Common myeloid progenitor, CD34-positive (primary cell): ENCODE measurements at regions of chr12 and their contacts with region 1.

Region 1: GRCh38 chr12:64256166-64256800 is 34.2 kb upstream of the KICS2 start:
- DNase-seq: peak; percentile 61 to 79 (median 71)
- H3K4me3 ChIP-seq: no peak overlapping the region
- H3K27ac ChIP-seq: no peak overlapping the region
- H3K4me1 ChIP-seq: peaks cover 0 to 3% (median 0%) of the 10 kb centered on the region in 4 experiments
- H3K27me3 ChIP-seq: no peaks in the 10 kb centered on the region

Region 2: GRCh38 chr12:63836936-63837335 is 419.3 kb before region 1 on chr12:
- CTCF ChIA-PET with region 1: interaction called, 53 read pairs
- POLR2A ChIA-PET with region 1: no interaction called
- DNase-seq: no peak
- H3K4me3 ChIP-seq: no peak overlapping the region
- H3K27ac ChIP-seq: no peak overlapping the region
- H3K4me1 ChIP-seq: no peaks in the 10 kb centered on the region
- H3K27me3 ChIP-seq: no peaks in the 10 kb centered on the region

Region 3: GRCh38 chr12:63843721-63844390 is 412.4 kb before region 1 on chr12:
- CTCF ChIA-PET with region 1: interaction called, 53 read pairs
- POLR2A ChIA-PET with region 1: no interaction called
- DNase-seq: peak; percentile 91 to 95 (median 95)
- H3K4me3 ChIP-seq: peak overlapping the region; percentile 72 to 94 (median 85)
- H3K27ac ChIP-seq: no peak overlapping the region
- H3K4me1 ChIP-seq: peaks cover 4 to 19% (median 12%) of the 10 kb centered on the region in 4 experiments
- H3K27me3 ChIP-seq: peaks cover 0 to 18% (median 7%) of the 10 kb centered on the region in 5 experiments